Left cardiac atrium (tissue), 4 donors: ENCODE measurements at regions of chr12 and their contacts with region 1.

Region 1: GRCh38 chr12:49967042-49967776 is 5.5 kb downstream of the AQP5 start:
- DNase-seq: peak; percentile 93
- ATAC-seq: peak; percentile 78 to 85

Region 2: DNA sequence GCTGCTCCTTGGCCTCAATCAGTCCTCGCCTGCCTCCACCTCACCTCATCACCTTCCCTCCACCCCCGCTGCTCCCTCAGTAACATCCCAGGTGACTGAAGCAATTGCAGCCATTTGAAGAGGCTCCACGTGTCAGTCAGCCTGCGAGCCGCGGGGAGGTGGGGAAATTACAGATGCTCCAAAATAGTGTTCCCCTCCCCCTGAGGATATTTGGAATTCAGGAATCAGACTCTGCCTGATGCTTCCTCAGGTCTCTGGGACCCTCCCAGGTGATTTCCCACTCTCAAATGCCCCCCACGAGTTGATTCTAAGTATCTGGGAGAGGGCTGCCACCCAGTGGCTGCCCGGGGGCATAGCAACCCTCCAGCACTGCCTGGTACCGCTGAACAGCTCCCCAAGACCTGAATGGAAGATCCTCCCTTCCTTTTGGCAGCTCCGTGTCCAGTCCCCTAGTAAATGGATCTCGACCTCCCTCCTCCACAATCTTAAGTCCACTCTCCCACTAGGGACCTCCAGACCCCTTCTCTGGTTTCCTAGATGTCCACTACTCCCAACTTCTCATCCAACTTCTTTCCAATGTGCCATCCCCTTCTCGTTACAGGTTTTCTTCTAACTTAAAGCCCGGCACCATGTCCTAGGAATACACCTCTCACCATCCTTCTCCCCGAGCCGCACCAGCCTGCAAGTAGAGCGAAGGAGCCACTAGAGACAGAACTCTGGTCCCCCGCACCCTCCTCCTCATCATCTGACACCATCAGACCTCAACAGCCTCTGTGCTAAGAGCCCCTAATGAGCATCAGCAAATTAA is 88.8 kb after region 1 on chr12:
- intact Hi-C with region 1: loop called (anchors 2 to 5 kb)
- DNase-seq: no peak
- ATAC-seq: peak in 1 of 2 donors; percentile 55

Region 3: GRCh38 chr12:50127546-50127945 is 160.3 kb after region 1 on chr12:
- intact Hi-C with region 1: no loop called
- DNase-seq: no peak
- ATAC-seq: peak in 1 of 2 donors; percentile 76